ENCODE measurements at regions of chr6 and their contacts with region 1.

Region 1: DNA sequence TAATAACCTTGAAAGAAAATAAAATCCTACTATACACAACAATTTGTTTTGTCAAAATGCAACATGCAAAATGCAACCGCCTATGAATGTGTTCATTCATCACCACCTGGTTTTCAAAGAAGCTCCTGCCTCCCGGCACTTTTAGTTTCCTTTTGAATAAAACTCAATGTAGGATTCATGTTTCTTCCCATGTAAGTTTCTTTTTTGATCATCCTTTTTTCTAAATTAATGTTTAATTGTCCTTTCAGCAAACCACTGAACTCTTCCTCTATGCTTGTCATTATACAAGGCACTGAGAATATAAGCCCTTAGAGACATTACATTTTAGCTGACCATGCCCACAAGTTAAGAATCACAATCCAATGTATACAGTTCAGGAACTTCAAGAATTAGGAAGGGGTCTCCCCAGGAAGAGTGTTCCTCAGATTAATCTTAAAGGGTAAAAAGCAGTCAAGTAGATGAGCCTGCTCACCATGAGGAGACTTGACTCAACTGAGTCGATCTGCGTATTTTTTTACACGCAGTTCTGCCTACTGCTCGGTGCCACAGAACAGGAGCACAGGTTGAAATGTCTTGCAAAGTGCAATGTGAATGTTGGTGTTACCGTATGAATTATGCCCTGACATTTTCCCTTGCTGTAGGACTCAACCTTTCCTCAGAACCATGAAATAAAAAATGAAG is 7.2 kb upstream of the THEMIS start:
- DNase-seq: peak; percentile 56
- H3K4me3 Mint-ChIP-seq: peak overlapping the region; percentile 70
- H3K27ac Mint-ChIP-seq: peak overlapping the region; percentile 86
- H3K4me1 Mint-ChIP-seq: peaks cover 67% of the 10 kb centered on the region
- H3K27me3 Mint-ChIP-seq: no peaks in the 10 kb centered on the region

Region 2: GRCh38 chr6:127737009-127737486 is 171.1 kb before region 1 on chr6:
- CTCF ChIA-PET with region 1: interaction called, 4 read pairs
- POLR2A ChIA-PET with region 1: no interaction called
- intact Hi-C with region 1: loop called (anchors 5 kb)
- DNase-seq: peak; percentile 30
- H3K4me3 Mint-ChIP-seq: no peak overlapping the region
- H3K27ac Mint-ChIP-seq: peak overlapping the region; percentile 25
- H3K4me1 Mint-ChIP-seq: peaks cover 44% of the 10 kb centered on the region
- H3K27me3 Mint-ChIP-seq: no peaks in the 10 kb centered on the region

Region 3: DNA sequence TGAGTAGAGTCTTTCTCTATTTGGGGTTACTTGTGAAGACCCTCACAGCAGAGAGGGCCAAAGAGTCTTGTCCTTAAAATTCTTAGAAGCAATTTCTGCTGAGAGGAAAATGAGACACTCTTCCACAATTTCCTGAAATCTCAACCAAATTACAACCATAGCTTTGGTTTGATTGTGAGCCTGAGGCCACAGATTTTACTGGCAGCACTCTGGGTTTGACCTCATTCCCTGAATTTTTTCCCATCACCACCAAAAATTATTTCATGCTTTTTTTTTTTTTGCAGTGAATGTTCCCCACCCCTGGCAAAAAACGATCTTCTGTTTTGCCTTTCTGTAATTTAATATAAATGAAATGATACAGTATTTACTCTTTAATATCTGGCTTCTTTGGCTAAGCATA is 132.7 kb before region 1 on chr6:
- CTCF ChIA-PET with region 1: no interaction called
- POLR2A ChIA-PET with region 1: no interaction called
- intact Hi-C with region 1: no loop called
- DNase-seq: no peak
- H3K4me3 Mint-ChIP-seq: no peak overlapping the region
- H3K27ac Mint-ChIP-seq: no peak overlapping the region
- H3K4me1 Mint-ChIP-seq: peaks cover 44% of the 10 kb centered on the region
- H3K27me3 Mint-ChIP-seq: no peaks in the 10 kb centered on the region

Region 4: DNA sequence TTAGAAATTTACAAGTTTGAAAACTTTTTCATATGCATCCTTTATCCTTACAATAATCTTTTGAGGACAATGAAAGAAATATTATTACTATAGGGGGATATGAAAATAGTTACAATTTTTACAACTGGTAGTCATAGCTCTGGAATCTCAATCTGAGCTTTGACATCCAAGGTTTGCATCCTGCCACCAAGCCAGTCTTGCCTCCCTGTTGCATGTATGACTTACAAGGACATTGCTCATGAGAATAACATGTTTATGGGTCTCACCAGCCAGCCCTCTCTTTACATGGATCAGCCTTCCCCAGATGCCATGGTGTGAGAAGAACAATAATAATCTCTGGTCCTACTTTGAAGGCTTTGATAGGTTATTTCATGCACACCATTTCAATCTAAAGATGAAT is 74.8 kb before region 1 on chr6:
- CTCF ChIA-PET with region 1: no interaction called
- POLR2A ChIA-PET with region 1: no interaction called
- intact Hi-C with region 1: no loop called
- DNase-seq: no peak
- H3K4me3 Mint-ChIP-seq: no peak overlapping the region
- H3K27ac Mint-ChIP-seq: no peak overlapping the region
- H3K4me1 Mint-ChIP-seq: peaks cover 33% of the 10 kb centered on the region
- H3K27me3 Mint-ChIP-seq: no peaks in the 10 kb centered on the region

Region 5: DNA sequence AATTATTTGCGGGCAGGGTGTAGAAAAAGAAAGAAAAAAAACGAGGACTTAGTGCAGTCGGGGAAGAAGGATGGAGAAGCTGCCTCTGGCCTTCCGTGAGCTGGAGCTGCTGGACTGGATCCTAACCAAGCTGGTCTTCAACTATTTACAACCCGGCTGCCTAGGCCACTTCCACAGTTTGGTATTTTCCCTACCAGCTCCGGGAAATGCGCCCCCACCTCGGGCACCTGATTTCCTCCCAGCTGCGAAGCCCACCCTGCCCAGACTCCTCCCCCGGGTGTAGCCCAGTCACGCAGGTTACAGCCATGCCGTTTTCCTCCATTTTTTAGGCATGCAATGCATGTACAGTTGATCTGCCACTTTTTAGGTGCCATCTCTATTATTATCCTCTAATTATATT is 28.4 kb before region 1 on chr6:
- CTCF ChIA-PET with region 1: no interaction called
- POLR2A ChIA-PET with region 1: no interaction called
- intact Hi-C with region 1: loop called (anchors 1 kb)
- DNase-seq: peak; percentile 30
- H3K4me3 Mint-ChIP-seq: peak overlapping the region; percentile 52
- H3K27ac Mint-ChIP-seq: no peak overlapping the region
- H3K4me1 Mint-ChIP-seq: peaks cover 68% of the 10 kb centered on the region
- H3K27me3 Mint-ChIP-seq: no peaks in the 10 kb centered on the region

Region 6: GRCh38 chr6:127918506-127919427 is 10.7 kb after region 1 on chr6:
- CTCF ChIA-PET with region 1: interaction called, 6 read pairs
- POLR2A ChIA-PET with region 1: interaction called, 8 read pairs
- intact Hi-C with region 1: loop called (anchors 1 kb)
- DNase-seq: no peak
- H3K4me3 Mint-ChIP-seq: peak overlapping the region; percentile 49
- H3K27ac Mint-ChIP-seq: peak overlapping the region; percentile 44
- H3K4me1 Mint-ChIP-seq: peaks cover 85% of the 10 kb centered on the region
- H3K27me3 Mint-ChIP-seq: no peaks in the 10 kb centered on the region

Region 7: GRCh38 chr6:127938701-127939100 is 30.6 kb after region 1 on chr6:
- CTCF ChIA-PET with region 1: interaction called, 3 read pairs
- POLR2A ChIA-PET with region 1: interaction called, 3 read pairs
- intact Hi-C with region 1: loop called (anchors 1 kb)
- DNase-seq: no peak
- H3K4me3 Mint-ChIP-seq: no peak overlapping the region
- H3K27ac Mint-ChIP-seq: peak overlapping the region; percentile 62
- H3K4me1 Mint-ChIP-seq: peaks cover 41% of the 10 kb centered on the region
- H3K27me3 Mint-ChIP-seq: no peaks in the 10 kb centered on the region

Region 8: GRCh38 chr6:128107682-128108081 is 199.6 kb after region 1 on chr6:
- CTCF ChIA-PET with region 1: no interaction called
- POLR2A ChIA-PET with region 1: no interaction called
- intact Hi-C with region 1: no loop called
- DNase-seq: no peak
- H3K4me3 Mint-ChIP-seq: no peak overlapping the region
- H3K27ac Mint-ChIP-seq: no peak overlapping the region
- H3K4me1 Mint-ChIP-seq: peaks cover 8% of the 10 kb centered on the region
- H3K27me3 Mint-ChIP-seq: no peaks in the 10 kb centered on the region

Region 9: DNA sequence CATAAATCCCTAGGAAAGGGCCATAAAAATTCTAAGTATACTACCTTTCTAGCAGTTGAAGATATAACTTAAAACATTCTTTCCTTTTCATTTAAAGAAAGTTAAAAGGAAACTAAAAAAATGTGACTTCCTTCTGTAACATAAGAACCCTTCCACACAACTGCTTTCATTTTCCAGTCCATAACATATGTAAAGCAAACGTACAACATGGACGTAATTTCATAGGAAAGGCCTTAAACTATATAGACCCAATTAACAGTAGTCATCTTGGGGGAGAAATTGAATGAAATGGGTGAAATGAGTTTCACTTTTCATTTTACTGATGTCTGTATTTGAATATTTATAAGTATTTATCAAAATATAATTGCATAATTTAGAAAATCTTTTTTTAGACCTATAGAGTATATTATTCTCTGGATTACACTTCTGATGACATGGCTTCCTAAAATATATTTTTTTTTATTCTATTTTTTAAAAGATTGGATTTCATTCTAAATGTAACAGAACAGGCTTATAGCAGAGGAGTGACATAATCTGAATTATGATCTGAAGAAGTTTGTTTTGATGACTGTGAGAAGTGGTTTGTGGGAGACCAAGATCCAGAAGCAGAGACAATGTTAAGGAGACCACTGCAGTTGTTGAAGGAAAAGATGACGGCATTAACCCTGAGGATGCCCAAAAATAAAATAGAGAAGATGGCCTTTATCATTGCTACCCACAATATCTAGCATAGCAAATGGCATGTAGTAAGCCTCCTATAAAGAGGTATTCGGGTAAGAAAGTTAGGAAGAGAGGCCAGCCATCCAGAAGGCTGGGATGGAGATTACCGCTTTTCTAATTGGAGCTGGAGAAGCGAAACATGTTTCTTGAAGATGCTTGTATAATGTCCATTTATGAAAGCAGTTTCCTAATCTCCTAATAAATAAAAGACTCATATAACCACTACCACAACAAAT is 351.9 kb after region 1 on chr6:
- CTCF ChIA-PET with region 1: no interaction called
- POLR2A ChIA-PET with region 1: no interaction called
- intact Hi-C with region 1: loop called (anchors 10 kb)
- DNase-seq: no peak
- H3K4me3 Mint-ChIP-seq: peak overlapping the region; percentile 14
- H3K27ac Mint-ChIP-seq: no peak overlapping the region
- H3K4me1 Mint-ChIP-seq: peaks cover 22% of the 10 kb centered on the region
- H3K27me3 Mint-ChIP-seq: no peaks in the 10 kb centered on the region

Measured in activated CD4-positive, alpha-beta memory T cell treated with anti-CD3 and anti-CD28 coated beads for 36 hours (primary cell).